ENCODE measurements at regions of chr6 and their contacts with region 1.

Region 1: GRCh38 chr6:3742426-3743344 is 8.8 kb downstream of the PXDC1 start:
- DNase-seq: peak; percentile 80 to 92
- H3K4me3 ChIP-seq: peak overlapping the region; percentile 96 to 97
- H3K27ac ChIP-seq: peak overlapping the region; percentile 99
- H3K4me1 ChIP-seq: peaks cover 6 to 99% (median 90%) of the 10 kb centered on the region in 4 donors
- H3K27me3 ChIP-seq: no peaks in the 10 kb centered on the region
- CTCF ChIP-seq: peak; percentile 89 to 96

Region 2: DNA sequence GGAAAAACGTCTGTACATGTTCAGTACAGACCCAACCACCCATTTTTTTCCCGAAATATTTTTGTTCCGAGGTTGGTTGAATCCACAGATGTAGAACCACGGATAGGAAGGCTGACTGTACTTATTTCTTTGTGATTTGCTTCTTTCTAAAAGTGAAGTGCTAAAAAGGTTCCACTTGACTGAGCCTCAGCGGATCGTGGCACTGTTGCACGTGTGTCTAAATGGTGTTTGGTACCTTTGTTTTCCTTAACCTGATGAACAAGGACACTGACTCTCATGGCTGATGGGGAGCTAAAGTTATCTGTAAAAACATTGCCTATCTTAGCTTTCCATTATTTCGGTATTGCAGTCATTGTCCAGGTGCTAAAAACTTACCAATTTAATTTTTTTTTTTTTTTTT is 618.0 kb before region 1 on chr6:
- intact Hi-C with region 1: loop called (anchors 5 kb)
- DNase-seq: no peak
- H3K4me3 ChIP-seq: no peak overlapping the region
- H3K27ac ChIP-seq: no peak overlapping the region
- H3K4me1 ChIP-seq: peaks cover 0 to 1% (median under 1%) of the 10 kb centered on the region in 4 donors
- H3K27me3 ChIP-seq: no peaks in the 10 kb centered on the region
- CTCF ChIP-seq: no peak

Region 3: GRCh38 chr6:3899970-3900439 is 157.3 kb after region 1 on chr6:
- intact Hi-C with region 1: no loop called
- DNase-seq: no peak
- H3K4me3 ChIP-seq: no peak overlapping the region
- H3K27ac ChIP-seq: no peak overlapping the region
- H3K4me1 ChIP-seq: peaks cover 0 to 17% (median 9%) of the 10 kb centered on the region in 4 donors
- H3K27me3 ChIP-seq: no peaks in the 10 kb centered on the region
- CTCF ChIP-seq: no peak

Region 4: GRCh38 chr6:3929281-3929798 is 186.7 kb after region 1 on chr6:
- intact Hi-C with region 1: loop called (anchors 5 kb)
- DNase-seq: no peak
- H3K4me3 ChIP-seq: no peak overlapping the region
- H3K27ac ChIP-seq: peak overlapping the region; percentile 10 to 25
- H3K4me1 ChIP-seq: peaks cover 0 to 31% (median 9%) of the 10 kb centered on the region in 4 donors
- H3K27me3 ChIP-seq: no peaks in the 10 kb centered on the region
- CTCF ChIP-seq: no peak

Region 5: GRCh38 chr6:3990692-3991501 is 248.2 kb after region 1 on chr6:
- intact Hi-C with region 1: loop called (anchors 5 kb)
- DNase-seq: peak; percentile 89 to 94
- H3K4me3 ChIP-seq: peak overlapping the region; percentile 54 to 57
- H3K27ac ChIP-seq: peak overlapping the region; percentile 81 to 82
- H3K4me1 ChIP-seq: peaks cover 0 to 29% (median 16%) of the 10 kb centered on the region in 4 donors
- H3K27me3 ChIP-seq: no peaks in the 10 kb centered on the region
- CTCF ChIP-seq: peak; percentile 81 to 84

Region 6: GRCh38 chr6:4135665-4136353 is 393.1 kb after region 1 on chr6:
- intact Hi-C with region 1: loop called (anchors 10 kb)
- DNase-seq: peak; percentile 97 to 99
- H3K4me3 ChIP-seq: peak overlapping the region; percentile 67 to 90
- H3K27ac ChIP-seq: peak overlapping the region; percentile 88 to 96
- H3K4me1 ChIP-seq: peaks cover 0 to 25% (median 16%) of the 10 kb centered on the region in 4 donors
- H3K27me3 ChIP-seq: no peaks in the 10 kb centered on the region
- CTCF ChIP-seq: peak in 1 of 2 experiments; percentile 19